ENCODE measurements at regions of chr10 and their contacts with region 1.

Region 1: DNA sequence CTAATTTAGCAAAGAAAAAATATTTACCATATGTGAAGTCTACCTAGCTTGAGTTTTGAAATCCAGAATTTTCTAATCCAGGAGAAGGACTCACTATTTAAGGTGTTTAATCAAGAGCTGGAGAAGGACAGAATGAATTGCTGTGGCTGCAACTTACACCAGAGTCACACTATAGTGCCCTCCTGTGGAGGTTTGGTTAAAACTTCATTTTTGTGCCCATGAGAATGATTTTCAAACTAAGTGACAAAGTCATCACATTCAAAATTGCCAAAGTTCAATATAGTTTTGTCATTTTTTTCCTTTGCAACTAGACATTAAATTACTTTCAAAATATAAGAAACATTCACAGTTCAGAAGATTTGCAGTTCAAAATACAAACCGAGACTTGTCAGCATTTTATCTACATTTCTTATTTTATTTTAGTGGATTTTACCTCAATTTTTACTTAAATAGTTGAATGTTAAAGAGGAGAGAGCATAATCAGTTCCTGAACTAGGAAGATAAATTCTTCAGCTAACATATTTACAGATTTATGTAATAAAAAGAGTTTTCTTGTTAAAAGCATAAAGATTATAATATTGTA is 70.7 kb downstream of the CABCOCO1 start:
- DNase-seq: peak; percentile 68
- H3K4me3 ChIP-seq: no peak overlapping the region
- H3K27ac ChIP-seq: no peak overlapping the region
- H3K4me1 ChIP-seq: peaks cover 3% of the 10 kb centered on the region
- H3K27me3 ChIP-seq: no peaks in the 10 kb centered on the region
- CTCF ChIP-seq: peak; percentile 44 to 49
- POLR2A ChIP-seq: no peak

Region 2: GRCh38 chr10:61024856-61025600 is 708.4 kb before region 1 on chr10:
- CTCF ChIA-PET with region 1: interaction called, 14 read pairs
- POLR2A ChIA-PET with region 1: no interaction called
- dilution Hi-C with region 1: no loop called
- intact Hi-C with region 1: no loop called
- DNase-seq: no peak
- H3K4me3 ChIP-seq: no peak overlapping the region
- H3K27ac ChIP-seq: no peak overlapping the region
- H3K4me1 ChIP-seq: no peaks in the 10 kb centered on the region
- H3K27me3 ChIP-seq: peaks cover 0 to 4% of the 10 kb centered on the region in 2 experiments
- CTCF ChIP-seq: peak; percentile 82
- POLR2A ChIP-seq: no peak

Region 3: GRCh38 chr10:61271127-61271823 is 462.2 kb before region 1 on chr10:
- CTCF ChIA-PET with region 1: interaction called, 14 read pairs
- POLR2A ChIA-PET with region 1: no interaction called
- dilution Hi-C with region 1: no loop called
- intact Hi-C with region 1: no loop called
- DNase-seq: peak; percentile 15
- H3K4me3 ChIP-seq: no peak overlapping the region
- H3K27ac ChIP-seq: no peak overlapping the region
- H3K4me1 ChIP-seq: no peaks in the 10 kb centered on the region
- H3K27me3 ChIP-seq: no peaks in the 10 kb centered on the region
- CTCF ChIP-seq: no peak
- POLR2A ChIP-seq: no peak

Region 4: DNA sequence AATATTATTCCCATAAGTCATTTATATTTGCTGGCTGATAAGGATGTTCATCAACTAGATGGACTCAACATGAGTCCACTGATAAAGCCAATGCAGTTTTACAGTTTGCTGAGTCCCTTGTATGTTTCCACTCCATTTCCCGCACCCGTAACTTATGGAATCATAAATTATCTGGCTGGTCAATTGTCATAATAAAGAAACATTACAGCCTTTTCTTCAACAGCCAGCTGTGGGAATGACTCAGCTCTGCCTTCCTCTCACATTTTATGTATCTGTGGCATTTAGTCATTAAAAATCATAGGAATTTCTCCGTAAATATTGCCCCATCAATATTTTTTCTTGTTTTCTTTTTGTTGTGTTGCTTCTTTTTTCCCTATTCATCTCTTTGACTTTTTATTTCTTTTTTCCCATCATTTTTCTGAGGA is 258.0 kb before region 1 on chr10:
- CTCF ChIA-PET with region 1: interaction called, 4 read pairs
- POLR2A ChIA-PET with region 1: no interaction called
- dilution Hi-C with region 1: no loop called
- intact Hi-C with region 1: loop called (anchors 2 kb)
- DNase-seq: peak; percentile 94
- H3K4me3 ChIP-seq: no peak overlapping the region
- H3K27ac ChIP-seq: peak overlapping the region; percentile 55
- H3K4me1 ChIP-seq: peaks cover 26% of the 10 kb centered on the region
- H3K27me3 ChIP-seq: no peaks in the 10 kb centered on the region
- CTCF ChIP-seq: no peak
- POLR2A ChIP-seq: no peak

Region 5: DNA sequence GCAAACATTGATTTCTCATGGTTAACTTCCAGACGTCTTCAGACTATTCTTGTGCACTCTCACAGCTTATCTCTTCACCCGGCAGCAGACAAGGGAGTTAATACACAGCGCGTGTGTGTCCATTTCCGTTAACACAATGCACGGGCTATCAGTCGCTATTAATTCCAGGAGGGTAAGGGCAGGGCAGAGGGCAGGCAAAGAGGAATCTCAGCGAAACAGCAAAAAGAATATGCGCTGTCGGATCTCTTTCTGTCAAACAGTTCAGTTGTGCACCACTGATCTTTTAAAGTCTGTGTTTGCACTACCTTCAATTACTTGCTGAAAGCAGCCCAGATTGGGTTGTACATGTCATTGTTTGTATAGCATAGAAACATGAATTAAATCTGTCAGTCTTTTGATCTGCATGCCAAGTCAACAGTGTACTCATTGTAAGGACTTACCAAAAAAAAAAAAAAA is 111.8 kb before region 1 on chr10:
- CTCF ChIA-PET with region 1: no interaction called
- POLR2A ChIA-PET with region 1: no interaction called
- dilution Hi-C with region 1: no loop called
- intact Hi-C with region 1: loop called (anchors 5 kb)
- DNase-seq: peak; percentile 78
- H3K4me3 ChIP-seq: peak overlapping the region in 2 of 3 experiments; percentile 7 to 47
- H3K27ac ChIP-seq: peak overlapping the region; percentile 48
- H3K4me1 ChIP-seq: peaks cover 27% of the 10 kb centered on the region
- H3K27me3 ChIP-seq: no peaks in the 10 kb centered on the region
- CTCF ChIP-seq: no peak
- POLR2A ChIP-seq: no peak

Region 6: GRCh38 chr10:61812052-61812721 is 78.7 kb after region 1 on chr10:
- CTCF ChIA-PET with region 1: no interaction called
- POLR2A ChIA-PET with region 1: no interaction called
- dilution Hi-C with region 1: no loop called
- intact Hi-C with region 1: no loop called
- DNase-seq: no peak
- H3K4me3 ChIP-seq: no peak overlapping the region
- H3K27ac ChIP-seq: no peak overlapping the region
- H3K4me1 ChIP-seq: no peaks in the 10 kb centered on the region
- H3K27me3 ChIP-seq: no peaks in the 10 kb centered on the region
- CTCF ChIP-seq: no peak
- POLR2A ChIP-seq: no peak